Testis (tissue), 5 donors: ENCODE measurements at regions of chr1 and their contacts with region 1.

Region 1: GRCh38 chr1:173195596-173196088 is 11.5 kb downstream of the TNFSF4 start:
- DNase-seq: no peak
- H3K4me3 ChIP-seq: no peak overlapping the region
- H3K27ac ChIP-seq: no peak overlapping the region
- H3K4me1 ChIP-seq: peaks cover 4% of the 10 kb centered on the region
- H3K27me3 ChIP-seq: no peaks in the 10 kb centered on the region
- CTCF ChIP-seq: no peak
- POLR2A ChIP-seq: no peak

Region 2: DNA sequence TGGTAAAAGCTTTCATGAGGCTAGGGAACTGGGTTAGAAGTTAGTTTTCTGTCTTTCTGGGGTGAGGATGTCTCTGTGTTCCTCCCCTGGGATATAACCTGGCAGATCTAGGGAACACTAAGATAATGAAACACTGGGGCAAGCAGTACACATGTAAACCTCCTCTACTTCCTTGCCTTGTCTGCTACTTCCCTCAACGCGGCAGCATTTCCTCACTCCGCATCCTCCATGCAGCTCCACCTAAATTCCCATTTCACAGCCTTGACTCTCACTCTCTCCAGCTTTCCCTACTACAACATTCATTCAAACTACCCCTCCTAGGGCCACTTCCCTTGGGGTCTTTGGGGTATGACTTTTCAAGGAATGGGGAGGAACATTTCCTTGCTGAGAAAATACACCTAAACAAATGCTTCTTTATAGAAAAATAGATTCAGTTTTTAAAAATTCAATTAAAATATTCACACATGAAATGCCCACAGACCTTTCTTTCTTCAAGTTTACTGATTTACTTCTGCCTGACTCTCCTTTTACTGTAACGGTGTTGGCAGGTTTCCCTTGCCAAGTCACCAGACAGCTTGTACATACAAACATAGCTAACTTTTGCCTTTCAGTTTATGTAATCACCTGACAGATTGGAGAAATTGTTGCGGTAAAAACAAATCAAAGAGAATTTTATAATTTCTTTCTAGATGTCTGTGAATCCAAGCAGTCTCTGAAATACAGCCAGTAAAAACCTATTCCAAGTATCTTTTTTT is 235.0 kb before region 1 on chr1:
- intact Hi-C with region 1: loop called (anchors 5 kb)
- DNase-seq: no peak
- H3K4me3 ChIP-seq: no peak overlapping the region
- H3K27ac ChIP-seq: no peak overlapping the region
- H3K4me1 ChIP-seq: no peaks in the 10 kb centered on the region
- H3K27me3 ChIP-seq: no peaks in the 10 kb centered on the region
- CTCF ChIP-seq: no peak
- POLR2A ChIP-seq: no peak